Activated CD8-positive, alpha-beta T cell treated with anti-CD3 and anti-CD28 coated beads for 36 hours (primary cell): ENCODE measurements at regions of chr17 and their contacts with region 1.

Region 1: GRCh38 chr17:45640141-45640850 is 143.8 kb upstream of the CRHR1 start:
- DNase-seq: peak; percentile 77
- ATAC-seq: peak; percentile 89
- H3K4me3 Mint-ChIP-seq: no peak overlapping the region
- H3K27ac Mint-ChIP-seq: peak overlapping the region; percentile 39
- H3K4me1 Mint-ChIP-seq: peaks cover 5% of the 10 kb centered on the region
- H3K27me3 Mint-ChIP-seq: no peaks in the 10 kb centered on the region
- CTCF ChIP-seq: peak; percentile 90

Region 2: GRCh38 chr17:45688353-45688752 is 48.1 kb after region 1 on chr17:
- CTCF ChIA-PET with region 1: no interaction called
- POLR2A ChIA-PET with region 1: no interaction called
- intact Hi-C with region 1: no loop called
- DNase-seq: no peak
- ATAC-seq: no peak
- H3K4me3 Mint-ChIP-seq: no peak overlapping the region
- H3K27ac Mint-ChIP-seq: no peak overlapping the region
- H3K4me1 Mint-ChIP-seq: no peaks in the 10 kb centered on the region
- H3K27me3 Mint-ChIP-seq: peaks cover 22% of the 10 kb centered on the region
- CTCF ChIP-seq: no peak

Region 3: GRCh38 chr17:45834471-45835396 is 194.4 kb after region 1 on chr17:
- CTCF ChIA-PET with region 1: interaction called, 58 read pairs
- POLR2A ChIA-PET with region 1: interaction called, 3 read pairs
- intact Hi-C with region 1: loop called (anchors 2 kb)
- DNase-seq: no peak
- ATAC-seq: no peak
- H3K4me3 Mint-ChIP-seq: no peak overlapping the region
- H3K27ac Mint-ChIP-seq: no peak overlapping the region
- H3K4me1 Mint-ChIP-seq: no peaks in the 10 kb centered on the region
- H3K27me3 Mint-ChIP-seq: peaks cover 2% of the 10 kb centered on the region
- CTCF ChIP-seq: no peak

Region 4: GRCh38 chr17:45852535-45853297 is 212.4 kb after region 1 on chr17:
- CTCF ChIA-PET with region 1: interaction called, 12 read pairs
- POLR2A ChIA-PET with region 1: no interaction called
- intact Hi-C with region 1: no loop called
- DNase-seq: peak; percentile 76
- ATAC-seq: peak; percentile 37
- H3K4me3 Mint-ChIP-seq: no peak overlapping the region
- H3K27ac Mint-ChIP-seq: no peak overlapping the region
- H3K4me1 Mint-ChIP-seq: peaks cover 5% of the 10 kb centered on the region
- H3K27me3 Mint-ChIP-seq: peaks cover 15% of the 10 kb centered on the region
- CTCF ChIP-seq: peak; percentile 92